ENCODE measurements at regions of chr2 and their contacts with region 1.

Region 1: DNA sequence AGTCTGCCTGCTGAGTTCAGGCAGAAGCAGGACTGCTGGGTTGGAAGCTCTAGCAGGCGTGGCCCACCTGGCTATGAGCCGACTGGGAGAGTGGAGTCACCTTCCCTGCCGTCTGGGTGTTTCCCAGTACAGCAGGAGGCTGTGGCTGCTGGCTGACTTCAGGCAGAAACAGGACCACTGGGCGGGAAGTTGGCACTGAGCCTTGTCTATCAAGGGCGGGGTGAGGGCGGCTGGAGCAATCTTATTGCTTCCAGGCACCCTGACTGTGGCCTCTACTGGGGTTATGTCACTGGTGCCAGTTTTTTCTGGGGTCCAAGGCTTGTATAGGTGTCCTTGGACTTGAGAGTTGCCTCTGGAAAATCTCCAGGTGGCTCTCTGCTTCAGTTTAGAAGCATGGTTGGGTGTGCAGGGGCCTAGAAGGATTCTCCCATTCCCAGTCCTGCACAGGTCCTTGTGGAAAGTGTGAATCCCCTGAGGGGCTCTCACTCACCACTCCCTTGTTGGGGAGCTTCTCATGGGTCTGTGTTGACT is 30.5 kb downstream of the LTBP1 start:
- DNase-seq: peak; percentile 89 to 92
- H3K4me3 ChIP-seq: no peak overlapping the region
- H3K27ac ChIP-seq: no peak overlapping the region
- H3K4me1 ChIP-seq: peaks cover 20% of the 10 kb centered on the region
- H3K27me3 ChIP-seq: no peaks in the 10 kb centered on the region
- CTCF ChIP-seq: no peak

Region 2: GRCh38 chr2:33013684-33014110 is 36.4 kb after region 1 on chr2:
- CTCF ChIA-PET with region 1: no interaction called
- POLR2A ChIA-PET with region 1: no interaction called
- intact Hi-C with region 1: loop called (anchors 5 kb)
- DNase-seq: peak in 1 of 2 experiments; percentile 57
- H3K4me3 ChIP-seq: no peak overlapping the region
- H3K27ac ChIP-seq: peak overlapping the region; percentile 27; the same call in 1 of the 2 replicates
- H3K4me1 ChIP-seq: peaks cover 57% of the 10 kb centered on the region
- H3K27me3 ChIP-seq: no peaks in the 10 kb centered on the region
- CTCF ChIP-seq: no peak

Measured in PC-9 (cell line).